ENCODE measurements at regions of chr11 and their contacts with region 1.

Region 1: GRCh38 chr11:104118105-104118744 is 45.7 kb downstream of the PDGFD start:
- DNase-seq: no peak
- H3K4me3 ChIP-seq: no peak overlapping the region
- H3K27ac ChIP-seq: no peak overlapping the region
- H3K4me1 ChIP-seq: no peaks in the 10 kb centered on the region
- H3K27me3 ChIP-seq: no peaks in the 10 kb centered on the region
- CTCF ChIP-seq: no peak
- POLR2A ChIP-seq: no peak

Region 2: GRCh38 chr11:103257360-103257759 is 860.9 kb before region 1 on chr11:
- intact Hi-C with region 1: no loop called
- DNase-seq: no peak
- H3K4me3 ChIP-seq: no peak overlapping the region
- H3K27ac ChIP-seq: no peak overlapping the region
- H3K4me1 ChIP-seq: no peaks in the 10 kb centered on the region
- H3K27me3 ChIP-seq: no peaks in the 10 kb centered on the region
- CTCF ChIP-seq: no peak
- POLR2A ChIP-seq: no peak

Region 3: GRCh38 chr11:103987629-103988594 is 130.3 kb before region 1 on chr11:
- intact Hi-C with region 1: no loop called
- DNase-seq: no peak
- H3K4me3 ChIP-seq: no peak overlapping the region
- H3K27ac ChIP-seq: peak overlapping the region in 1 of 2 donors; percentile 48
- H3K4me1 ChIP-seq: no peaks in the 10 kb centered on the region
- H3K27me3 ChIP-seq: no peaks in the 10 kb centered on the region
- CTCF ChIP-seq: no peak
- POLR2A ChIP-seq: no peak

Region 4: DNA sequence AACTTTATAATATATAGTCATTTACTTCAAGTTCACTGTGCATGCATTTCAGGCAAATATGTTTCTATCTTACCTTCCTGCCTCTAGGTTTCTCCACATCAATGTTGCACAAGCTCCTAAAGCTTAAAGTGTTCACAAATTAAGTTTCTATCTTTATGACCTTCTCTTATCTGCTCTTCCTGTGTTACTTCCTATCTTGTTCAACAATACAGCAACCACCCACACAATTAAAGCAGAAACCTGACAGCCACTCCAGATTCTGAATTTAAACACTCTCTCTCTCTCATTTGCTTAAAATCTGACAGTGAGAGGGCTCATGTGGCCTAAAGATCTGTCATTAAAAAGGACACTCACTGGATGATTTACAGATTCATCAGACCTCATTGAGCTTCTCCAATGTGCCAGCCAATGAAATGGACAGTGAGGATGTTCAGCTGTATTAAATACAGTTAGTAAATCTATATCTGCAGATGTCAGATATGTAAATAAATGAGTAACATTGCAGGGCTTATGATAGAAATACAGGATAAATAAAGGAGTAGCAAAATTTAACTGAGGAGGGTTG is 34.8 kb after region 1 on chr11:
- intact Hi-C with region 1: no loop called
- DNase-seq: no peak
- H3K4me3 ChIP-seq: no peak overlapping the region
- H3K27ac ChIP-seq: no peak overlapping the region
- H3K4me1 ChIP-seq: no peaks in the 10 kb centered on the region
- H3K27me3 ChIP-seq: no peaks in the 10 kb centered on the region
- CTCF ChIP-seq: no peak
- POLR2A ChIP-seq: no peak

Region 5: DNA sequence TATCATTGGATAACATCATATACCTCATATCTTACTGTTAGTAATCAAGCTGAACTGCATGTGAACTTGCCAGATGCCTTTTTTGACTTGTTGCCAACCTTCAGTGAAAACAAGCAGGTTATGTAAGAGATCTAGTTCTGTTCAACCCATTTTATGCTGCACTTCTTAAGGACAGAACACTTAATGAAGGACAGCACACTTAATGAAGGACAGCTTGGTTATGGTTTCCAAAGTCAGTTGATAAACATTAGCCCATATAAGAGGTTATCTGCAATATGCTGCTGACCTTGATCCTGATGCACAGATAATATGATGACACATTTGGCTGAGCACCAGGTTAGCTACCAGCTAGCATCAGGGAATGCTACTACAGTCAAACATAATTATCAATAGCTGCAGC is 404.4 kb after region 1 on chr11:
- intact Hi-C with region 1: loop called (anchors 5 kb)
- DNase-seq: no peak
- H3K4me3 ChIP-seq: no peak overlapping the region
- H3K27ac ChIP-seq: no peak overlapping the region
- H3K4me1 ChIP-seq: no peaks in the 10 kb centered on the region
- H3K27me3 ChIP-seq: no peaks in the 10 kb centered on the region
- CTCF ChIP-seq: no peak
- POLR2A ChIP-seq: no peak

Measured in breast epithelium (tissue), 4 donors.